ENCODE measurements at regions of chr9 and their contacts with region 1.

Region 1: GRCh38 chr9:113275157-113276131 is at the starts of genes CDC26 and PRPF4:
- DNase-seq: peak; percentile 99
- total RNA-seq, gene CDC26: 35.1 TPM
- total RNA-seq, gene PRPF4: 10.5 TPM

Region 2: GRCh38 chr9:113221003-113221799 is 54.2 kb before region 1 on chr9 and contains the starts of genes FKBP15 and SLC31A1:
- intact Hi-C with region 1: loop called (anchors 2 kb)
- DNase-seq: peak; percentile 99
- total RNA-seq, gene FKBP15: 17.9 TPM
- total RNA-seq, gene SLC31A1: 9.6 TPM

Region 3: DNA sequence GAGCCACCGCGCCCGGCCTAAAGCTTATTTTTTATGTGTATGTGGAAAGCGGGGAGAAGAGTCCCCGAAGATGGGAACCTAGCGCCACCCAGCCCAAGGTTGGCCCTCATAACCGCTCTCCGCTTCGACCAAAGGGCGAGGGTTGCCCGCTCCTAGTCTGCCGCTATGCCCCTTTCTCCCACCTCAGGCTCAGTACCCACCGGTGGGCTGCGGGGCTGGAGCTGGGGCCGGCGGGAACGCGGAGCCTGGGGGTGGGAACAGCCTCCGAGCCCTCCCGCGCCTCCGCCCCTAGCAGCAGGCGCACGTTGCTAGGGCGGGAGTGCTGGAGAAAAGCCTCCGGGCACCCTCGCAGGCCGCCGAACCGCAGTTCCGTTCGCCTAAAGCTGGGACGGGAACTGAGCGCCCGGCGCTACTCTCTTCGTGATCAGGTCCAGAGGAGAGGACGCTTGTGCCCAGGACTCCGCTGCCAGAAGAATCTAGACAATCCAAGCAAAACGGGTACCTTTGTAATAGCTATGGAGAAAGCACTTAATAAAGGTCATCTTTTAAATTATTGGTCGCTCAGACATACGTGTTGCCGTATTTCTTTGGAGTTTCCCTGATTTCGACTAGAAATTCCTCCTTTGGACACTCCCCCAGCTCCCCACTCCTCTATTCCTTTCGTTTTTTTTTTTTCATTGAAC is 64.7 kb after region 1 on chr9 and contains the start of gene WDR31:
- intact Hi-C with region 1: loop called (anchors 2 kb)
- DNase-seq: peak; percentile 96
- total RNA-seq, gene WDR31: 10.9 TPM

Region 4: DNA sequence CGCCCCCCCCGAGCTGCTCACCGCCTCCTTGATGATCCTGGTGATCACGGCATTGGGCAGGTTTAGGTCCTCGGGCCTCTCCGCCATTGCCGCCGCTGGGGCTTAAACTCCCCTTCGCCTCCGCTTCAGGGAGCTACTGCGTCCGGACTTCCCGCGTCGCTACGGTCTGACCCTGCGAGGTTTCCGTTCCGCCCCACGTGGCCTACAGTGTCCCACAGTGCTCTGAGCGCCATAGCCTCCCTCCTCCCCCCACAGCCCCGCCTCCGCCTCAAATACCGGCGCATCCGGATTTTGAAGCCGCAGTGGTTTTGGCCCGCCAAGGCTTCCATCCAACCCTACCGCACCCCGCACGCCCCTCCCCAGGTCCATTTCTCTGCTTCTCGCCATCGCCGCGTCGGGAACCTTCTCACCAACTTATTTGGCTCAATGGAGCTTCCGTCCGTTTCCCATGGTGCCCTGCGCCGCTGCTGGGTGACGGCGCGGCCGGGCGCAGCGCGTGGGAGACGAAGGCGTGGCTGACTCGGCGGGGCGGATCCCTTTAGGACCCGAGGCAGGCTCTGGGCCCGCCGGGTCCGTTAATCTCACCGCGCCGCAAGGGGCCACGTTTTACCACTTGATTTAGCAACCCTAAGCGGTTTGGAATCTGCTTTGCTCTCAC is 134.9 kb after region 1 on chr9 and contains the starts of genes C9orf43 and POLE3:
- intact Hi-C with region 1: loop called (anchors 1 kb)
- DNase-seq: peak; percentile 96
- total RNA-seq, gene C9orf43: 0.16 TPM
- total RNA-seq, gene POLE3: 16.9 TPM

Region 5: DNA sequence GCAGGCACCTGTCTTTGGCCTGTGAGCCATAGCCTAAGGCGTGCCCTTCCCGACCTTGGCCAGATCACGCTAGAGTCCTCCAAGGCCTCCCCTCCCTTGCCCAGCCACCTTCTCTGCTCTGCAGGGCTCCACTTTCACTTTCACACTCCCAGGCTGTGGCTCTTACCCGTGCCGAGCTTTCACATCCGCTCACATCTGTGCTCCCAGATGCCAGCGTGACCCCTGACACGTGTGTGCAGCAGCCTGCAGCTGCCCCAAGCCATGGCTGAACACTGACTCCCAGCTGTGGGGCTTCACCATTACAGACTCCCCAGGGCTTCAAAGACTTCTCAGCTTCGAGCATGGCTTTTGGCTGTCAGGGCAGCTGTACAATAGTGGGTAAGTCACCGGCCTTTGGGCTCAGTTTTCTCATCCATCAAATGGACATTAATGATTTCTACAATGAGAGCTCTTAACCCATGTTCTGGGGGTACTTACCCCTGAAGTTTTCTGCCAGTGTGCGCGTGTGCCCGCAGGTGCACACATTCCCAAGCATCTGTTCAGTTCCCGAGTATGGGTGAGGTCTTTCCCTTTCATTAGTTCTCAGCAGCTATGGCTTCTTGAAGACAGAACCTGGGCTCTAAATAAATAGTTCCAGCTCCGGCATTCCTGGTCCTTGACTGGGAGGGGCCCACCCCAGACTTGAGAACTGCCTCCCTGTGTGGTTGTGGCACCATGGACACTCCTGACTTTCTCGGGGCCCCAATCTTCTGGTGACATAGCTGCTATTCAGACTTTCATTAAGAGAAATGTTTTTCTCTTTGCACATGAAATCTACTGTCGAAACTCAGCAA is 306.6 kb after region 1 on chr9:
- intact Hi-C with region 1: loop called (anchors 10 kb)
- DNase-seq: peak; percentile 89